ENCODE measurements at regions of chr19 and their contacts with region 1.

Region 1: DNA sequence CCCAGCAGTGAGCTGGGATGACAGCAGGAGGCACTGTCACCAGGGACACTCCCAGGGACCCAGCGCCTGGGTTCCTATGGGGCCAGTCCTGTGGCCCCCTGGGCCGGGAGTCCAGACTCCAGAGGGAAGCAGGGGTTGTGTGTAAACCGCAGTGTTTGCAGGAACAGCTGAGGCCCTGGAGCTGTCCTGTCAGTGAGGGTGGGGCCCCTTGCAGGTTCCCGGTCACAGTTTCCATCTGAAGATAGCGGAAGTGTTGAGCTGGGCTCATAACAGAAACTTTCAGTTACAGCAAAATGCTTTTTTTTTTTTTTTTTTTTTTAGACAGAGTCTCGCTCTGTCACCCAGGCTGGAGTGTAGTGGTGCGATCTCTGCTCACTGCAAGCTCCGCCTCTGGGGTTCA is 17.7 kb upstream of the CSNK1G2 start:
- DNase-seq: no peak
- H3K4me3 ChIP-seq: no peak overlapping the region
- H3K27ac ChIP-seq: no peak overlapping the region
- H3K4me1 ChIP-seq: peaks cover 0 to 3% (median 0%) of the 10 kb centered on the region in 4 experiments; a peak in 1 of 7 replicates
- H3K27me3 ChIP-seq: no peaks in the 10 kb centered on the region; a peak in 1 of 7 replicates
- CTCF ChIP-seq: no peak
- EP300 ChIP-seq: no peak
- POLR2A ChIP-seq: no peak
- RAD21 ChIP-seq: no peak

Region 2: GRCh38 chr19:1884719-1885334 is 38.5 kb before region 1 on chr19:
- CTCF ChIA-PET with region 1: no interaction called
- POLR2A ChIA-PET with region 1: no interaction called
- DNase-seq: no peak
- H3K4me3 ChIP-seq: peak overlapping the region; percentile 69 to 81 (median 76)
- H3K27ac ChIP-seq: no peak overlapping the region
- H3K4me1 ChIP-seq: peaks cover 3 to 14% (median 9%) of the 10 kb centered on the region in 4 experiments; a peak in 6 of 7 replicates
- H3K27me3 ChIP-seq: no peaks in the 10 kb centered on the region; a peak in 2 of 7 replicates
- CTCF ChIP-seq: no peak
- EP300 ChIP-seq: no peak
- POLR2A ChIP-seq: no peak
- RAD21 ChIP-seq: no peak

Region 3: GRCh38 chr19:1905071-1905862 is 18.1 kb before region 1 on chr19 and contains the starts of genes ADAT3 and SCAMP4:
- CTCF ChIA-PET with region 1: interaction called, 9 read pairs
- POLR2A ChIA-PET with region 1: interaction called, 10 read pairs
- DNase-seq: peak; percentile 94 to 95
- H3K4me3 ChIP-seq: peak within 1 kb of the TSS; percentile 51 to 71 (median 58)
- H3K27ac ChIP-seq: peak within 1 kb of the TSS; percentile 87
- H3K4me1 ChIP-seq: peaks cover 0 to 9% (median 8%) of the 10 kb centered on the region in 4 experiments; a peak in 5 of 7 replicates
- H3K27me3 ChIP-seq: no peaks in the 10 kb centered on the region
- CTCF ChIP-seq: no peak
- EP300 ChIP-seq: peak in 1 of 2 experiments; percentile 62; a peak in 1 of 3 replicates
- POLR2A ChIP-seq: peak in 1 of 2 experiments; percentile 82; a peak in 1 of 3 replicates
- RAD21 ChIP-seq: no peak
- total RNA-seq, gene ADAT3: 10.2 and 10.8 TPM in 2 replicates
- total RNA-seq, gene SCAMP4: 61.4 and 65.7 TPM in 2 replicates

Region 4: GRCh38 chr19:1911995-1912394 is 11.3 kb before region 1 on chr19:
- CTCF ChIA-PET with region 1: interaction called, 9 read pairs
- POLR2A ChIA-PET with region 1: interaction called, 13 read pairs
- DNase-seq: no peak
- H3K4me3 ChIP-seq: no peak overlapping the region
- H3K27ac ChIP-seq: no peak overlapping the region
- H3K4me1 ChIP-seq: no peaks in the 10 kb centered on the region; a peak in 3 of 7 replicates
- H3K27me3 ChIP-seq: no peaks in the 10 kb centered on the region
- CTCF ChIP-seq: no peak
- EP300 ChIP-seq: no peak
- POLR2A ChIP-seq: no peak
- RAD21 ChIP-seq: no peak

Measured in H1 (cell line).